ENCODE measurements at regions of chr6 and their contacts with region 1.

Region 1: GRCh38 chr6:33425668-33426577 is 6.1 kb downstream of the SYNGAP1 start:
- H3K4me3 ChIP-seq: peak overlapping the region; percentile 69
- H3K27ac ChIP-seq: peak overlapping the region; percentile 80
- H3K4me1 ChIP-seq: peaks cover 7% of the 10 kb centered on the region
- CTCF ChIP-seq: peak; percentile 44

Region 2: GRCh38 chr6:33288921-33289748 is 136.8 kb before region 1 on chr6 and contains the starts of genes PFDN6 and WDR46:
- CTCF ChIA-PET with region 1: interaction called, 12 read pairs
- POLR2A ChIA-PET with region 1: no interaction called
- H3K4me3 ChIP-seq: peak within 1 kb of the TSS; percentile 79
- H3K27ac ChIP-seq: peak within 1 kb of the TSS; percentile 44
- H3K4me1 ChIP-seq: peaks cover 11% of the 10 kb centered on the region; the same call in 1 of the 2 replicates
- CTCF ChIP-seq: no peak

Region 3: GRCh38 chr6:33439956-33440648 is 14.2 kb after region 1 on chr6:
- CTCF ChIA-PET with region 1: interaction called, 10 read pairs
- POLR2A ChIA-PET with region 1: interaction called, 12 read pairs
- H3K4me3 ChIP-seq: no peak overlapping the region
- H3K27ac ChIP-seq: no peak overlapping the region
- H3K4me1 ChIP-seq: no peaks in the 10 kb centered on the region
- CTCF ChIP-seq: no peak

Measured in HEK293 (cell line).